ENCODE measurements at regions of chrX and their contacts with region 1.

Region 1: DNA sequence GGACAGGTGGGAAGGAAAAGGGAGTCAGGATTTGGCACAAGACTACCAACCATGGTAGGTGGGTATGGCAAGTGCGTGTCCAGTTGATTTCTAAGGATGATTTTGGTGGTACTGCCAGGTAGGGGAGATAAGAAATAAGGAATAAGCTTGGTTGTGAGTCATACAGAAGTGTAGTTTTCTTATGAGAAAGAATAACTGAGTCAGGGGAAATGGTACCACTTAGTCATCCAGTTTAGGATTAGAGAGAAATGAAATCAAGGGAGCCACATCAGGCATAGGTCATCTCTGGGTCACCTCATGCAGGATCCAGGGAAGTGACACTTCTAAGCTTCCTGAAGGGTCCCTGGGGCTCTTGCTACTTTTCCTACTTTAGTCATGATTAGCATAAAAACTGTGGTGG is 107.1 kb upstream of the C1GALT1C1 start:
- DNase-seq: peak; percentile 21
- H3K4me3 Mint-ChIP-seq: no peak overlapping the region
- H3K27ac Mint-ChIP-seq: peak overlapping the region; percentile 28
- H3K4me1 Mint-ChIP-seq: peaks cover 25% of the 10 kb centered on the region
- H3K27me3 Mint-ChIP-seq: no peaks in the 10 kb centered on the region

Region 2: DNA sequence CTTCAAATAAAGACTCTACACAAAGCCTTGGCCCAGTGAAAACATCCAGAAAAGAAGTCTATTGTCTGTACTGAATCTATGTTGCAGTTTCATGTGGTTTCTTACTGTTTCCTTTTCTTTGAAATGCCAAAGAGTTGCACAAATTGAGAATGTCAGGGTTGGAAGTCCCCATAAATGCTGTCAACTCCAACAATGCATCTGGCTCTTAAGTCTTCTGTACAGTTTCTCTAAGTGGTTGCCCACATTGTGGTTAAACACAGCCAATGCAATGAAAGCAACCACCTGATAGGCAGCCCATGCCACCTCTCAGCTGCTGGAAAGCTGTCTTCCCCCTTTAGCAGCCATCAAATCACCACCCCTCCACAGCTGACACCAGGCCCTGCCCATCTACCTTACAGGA is 39.9 kb before region 1 on chrX:
- CTCF ChIA-PET with region 1: no interaction called
- intact Hi-C with region 1: loop called (anchors 1 kb)
- DNase-seq: peak; percentile 69
- H3K4me3 Mint-ChIP-seq: no peak overlapping the region
- H3K27ac Mint-ChIP-seq: peak overlapping the region; percentile 83
- H3K4me1 Mint-ChIP-seq: peaks cover 27% of the 10 kb centered on the region
- H3K27me3 Mint-ChIP-seq: no peaks in the 10 kb centered on the region

Region 3: GRCh38 chrX:120755066-120755846 is 18.3 kb after region 1 on chrX:
- CTCF ChIA-PET with region 1: interaction called, 3 read pairs
- intact Hi-C with region 1: loop called (anchors 1 kb)
- DNase-seq: peak; percentile 40
- H3K4me3 Mint-ChIP-seq: no peak overlapping the region
- H3K27ac Mint-ChIP-seq: peak overlapping the region; percentile 67
- H3K4me1 Mint-ChIP-seq: peaks cover 45% of the 10 kb centered on the region
- H3K27me3 Mint-ChIP-seq: no peaks in the 10 kb centered on the region

Region 4: GRCh38 chrX:120769576-120770341 is 32.8 kb after region 1 on chrX:
- CTCF ChIA-PET with region 1: no interaction called
- intact Hi-C with region 1: loop called (anchors 2 kb)
- DNase-seq: peak; percentile 21
- H3K4me3 Mint-ChIP-seq: no peak overlapping the region
- H3K27ac Mint-ChIP-seq: no peak overlapping the region
- H3K4me1 Mint-ChIP-seq: peaks cover 2% of the 10 kb centered on the region
- H3K27me3 Mint-ChIP-seq: no peaks in the 10 kb centered on the region

Measured in activated naive CD4-positive, alpha-beta T cell treated with anti-CD3 and anti-CD28 coated beads for 36 hours (primary cell).